ENCODE measurements at regions of chr3 and their contacts with region 1.

Region 1: GRCh38 chr3:13495921-13496723 is 16.0 kb downstream of the HDAC11 start:
- DNase-seq: peak; percentile 74
- H3K4me3 ChIP-seq: no peak overlapping the region
- H3K27ac ChIP-seq: no peak overlapping the region
- H3K4me1 ChIP-seq: no peaks in the 10 kb centered on the region
- H3K27me3 ChIP-seq: no peaks in the 10 kb centered on the region
- CTCF ChIP-seq: peak; percentile 86

Region 2: DNA sequence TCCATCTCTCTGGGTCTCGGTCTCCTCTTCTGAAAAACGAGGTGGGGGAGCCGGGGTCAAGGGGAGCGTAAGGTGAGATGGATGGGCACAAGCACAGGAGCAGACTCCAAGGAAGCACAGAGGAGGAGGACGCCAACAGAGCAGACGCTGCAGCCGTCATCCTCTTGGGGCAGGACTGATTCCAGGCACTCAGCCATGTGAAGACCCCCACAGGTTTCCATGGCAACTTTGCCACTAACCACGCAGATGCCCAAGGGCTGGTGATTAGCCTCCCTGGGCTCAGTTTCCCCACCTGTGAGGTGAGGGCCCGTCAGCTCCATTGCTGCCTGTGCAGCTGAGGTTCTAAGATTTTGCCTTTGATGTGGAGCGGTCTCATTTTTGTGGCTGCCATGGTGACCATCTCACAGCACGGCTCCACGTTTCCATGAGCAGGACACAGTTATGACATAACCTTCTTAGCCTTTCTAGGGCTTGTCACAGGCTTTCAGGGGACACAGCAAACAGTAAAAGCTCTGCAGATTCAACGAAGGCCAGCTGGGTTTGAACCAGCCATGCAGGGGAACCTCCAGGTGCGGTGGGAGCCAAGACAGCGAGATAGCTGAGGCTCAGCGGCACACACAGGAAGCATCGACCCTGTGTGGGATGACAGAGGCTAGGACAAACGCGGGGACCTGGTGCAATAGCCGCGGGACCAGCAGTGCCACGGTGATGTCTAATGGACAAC is 246.3 kb before region 1 on chr3:
- CTCF ChIA-PET with region 1: interaction called, 10 read pairs
- POLR2A ChIA-PET with region 1: no interaction called
- intact Hi-C with region 1: no loop called
- DNase-seq: no peak
- H3K4me3 ChIP-seq: no peak overlapping the region
- H3K27ac ChIP-seq: no peak overlapping the region
- H3K4me1 ChIP-seq: no peaks in the 10 kb centered on the region
- H3K27me3 ChIP-seq: peaks cover 2% of the 10 kb centered on the region
- CTCF ChIP-seq: no peak

Region 3: DNA sequence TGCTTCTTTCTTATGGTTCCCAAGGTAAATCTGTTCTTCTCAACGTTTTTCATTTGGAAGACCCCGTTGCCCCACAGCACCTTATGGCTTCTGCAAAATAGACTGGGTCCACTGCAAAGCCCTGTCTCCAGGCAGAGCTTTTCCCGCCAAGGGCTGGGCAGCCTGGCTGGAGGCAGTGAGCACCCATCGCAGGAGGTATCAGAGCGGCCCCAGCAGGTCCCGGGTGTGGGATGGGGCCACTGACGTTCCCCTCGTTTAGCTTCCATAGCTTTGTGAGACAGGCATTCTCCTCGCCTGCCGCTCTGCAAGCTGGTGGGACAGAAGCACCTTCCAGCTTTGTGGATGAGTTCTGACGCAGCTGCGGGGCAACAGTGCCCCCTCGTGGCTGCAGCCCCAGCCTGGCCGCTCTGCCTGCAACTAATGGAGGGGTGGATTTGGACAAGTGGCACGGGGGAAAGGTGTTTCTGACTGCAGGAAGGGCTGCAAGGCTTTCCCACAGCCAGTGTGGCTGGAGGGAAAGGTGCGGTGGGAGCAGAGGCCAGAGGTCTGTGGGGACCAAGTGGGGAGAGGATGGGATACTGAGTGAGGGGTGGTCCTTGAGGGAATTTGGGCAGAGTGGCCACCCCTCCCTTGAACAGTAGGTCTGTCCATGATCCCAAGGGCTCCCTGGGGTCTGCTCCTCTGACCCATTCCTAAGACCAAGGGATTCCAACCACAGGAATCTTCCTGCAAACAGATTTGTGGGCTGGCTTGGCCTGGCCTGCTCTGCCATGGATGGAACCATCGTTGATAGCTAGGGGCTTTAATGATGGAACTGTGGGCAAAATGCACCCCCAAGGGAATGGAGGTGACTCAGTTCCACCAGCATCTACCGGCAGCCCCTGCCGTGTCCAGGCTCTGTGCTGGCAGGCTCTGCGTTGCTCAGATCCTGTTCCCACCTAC is 152.2 kb after region 1 on chr3:
- CTCF ChIA-PET with region 1: interaction called, 99 read pairs
- POLR2A ChIA-PET with region 1: interaction called, 3 read pairs
- intact Hi-C with region 1: loop called (anchors 1 kb)
- DNase-seq: peak; percentile 82
- H3K4me3 ChIP-seq: no peak overlapping the region
- H3K27ac ChIP-seq: no peak overlapping the region
- H3K4me1 ChIP-seq: peaks cover 7% of the 10 kb centered on the region
- H3K27me3 ChIP-seq: no peaks in the 10 kb centered on the region
- CTCF ChIP-seq: peak; percentile 98

Measured in A673 (cell line).